Activated CD4-positive, alpha-beta T cell treated with anti-CD3 and anti-CD28 coated beads for 36 hours (primary cell): ENCODE measurements at regions of chr19 and their contacts with region 1.

Region 1: DNA sequence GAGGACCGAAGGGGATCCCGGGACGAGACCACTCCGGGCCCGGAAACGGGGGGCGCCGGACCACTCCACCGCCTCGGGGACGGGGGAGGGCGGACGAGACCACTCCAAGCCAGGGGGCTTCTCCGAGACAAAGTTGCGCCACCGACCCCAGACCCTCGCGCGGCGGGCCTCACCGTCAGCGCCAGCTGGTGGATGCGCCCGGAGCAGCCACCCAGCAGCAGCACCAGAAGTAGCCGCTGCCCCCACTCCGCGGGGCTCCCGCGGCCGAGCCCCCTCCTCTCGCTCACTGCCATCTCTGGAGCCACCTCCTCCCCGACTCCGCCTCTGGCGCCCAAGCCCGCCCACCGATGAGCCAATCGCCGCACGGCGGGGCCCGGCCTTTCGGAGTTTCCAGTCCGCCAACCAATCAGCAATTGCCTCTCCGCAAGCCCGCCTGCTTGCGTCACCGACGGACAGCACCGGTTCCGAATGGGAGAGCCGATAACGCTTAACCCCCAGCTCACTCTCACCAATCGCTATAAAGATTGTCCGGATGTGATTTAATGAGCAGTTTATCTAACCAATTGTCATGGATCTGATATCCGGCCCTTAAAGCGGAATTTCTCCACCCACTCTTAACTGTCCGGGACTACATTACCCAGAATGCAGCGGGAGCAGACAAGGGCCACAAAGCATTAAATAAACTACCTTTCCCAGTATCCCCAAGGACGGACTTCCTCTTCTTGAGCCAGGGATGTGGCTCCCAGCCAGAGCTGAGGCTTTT is at the start of gene GPR108:
- DNase-seq: peak; percentile 100
- ATAC-seq: peak; percentile 81
- H3K4me3 Mint-ChIP-seq: peak within 1 kb of the TSS; percentile 89
- H3K27ac Mint-ChIP-seq: peak within 1 kb of the TSS; percentile 98
- H3K4me1 Mint-ChIP-seq: peaks cover 39% of the 10 kb centered on the region
- H3K27me3 Mint-ChIP-seq: no peaks in the 10 kb centered on the region
- total RNA-seq, gene GPR108: 58.8 to 59.9 TPM

Region 2: DNA sequence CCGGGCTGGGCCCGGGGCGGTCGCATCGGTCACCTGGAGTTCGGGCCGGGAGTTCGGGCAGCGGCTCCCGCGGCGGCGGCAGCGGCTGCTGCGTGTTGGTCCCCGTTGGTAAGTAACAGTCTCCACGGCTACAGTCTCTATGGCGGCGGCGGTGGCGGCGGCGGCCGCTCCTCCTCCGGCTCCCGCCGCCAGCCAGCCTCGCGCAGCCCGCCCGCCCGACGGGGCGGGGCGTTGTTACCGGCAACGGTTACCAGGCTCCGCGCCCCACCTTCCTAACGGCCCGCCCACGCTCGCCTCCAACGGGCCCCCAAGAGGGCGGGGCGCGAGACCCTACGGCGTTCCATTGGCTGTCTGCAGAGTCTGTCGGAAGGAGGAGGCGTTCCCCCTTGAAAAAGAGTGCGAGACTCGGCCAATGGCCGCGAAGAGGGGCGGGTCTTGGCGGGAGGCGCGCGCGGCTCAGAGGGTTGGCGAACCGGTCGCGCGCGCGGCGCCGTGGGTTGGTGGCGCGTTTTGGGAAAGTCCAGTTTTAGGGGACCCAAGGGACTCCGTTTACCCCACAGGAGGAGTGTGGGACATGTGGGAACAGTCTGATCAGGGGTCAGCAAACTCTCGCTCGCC is 627.0 kb before region 1 on chr19 and contains the start of gene RFX2:
- CTCF ChIA-PET with region 1: no interaction called
- POLR2A ChIA-PET with region 1: no interaction called
- intact Hi-C with region 1: loop called in 1 of 2 experiments (anchors 1 kb)
- DNase-seq: peak; percentile 100
- ATAC-seq: peak; percentile 98
- H3K4me3 Mint-ChIP-seq: peak within 1 kb of the TSS; percentile 76
- H3K27ac Mint-ChIP-seq: peak within 1 kb of the TSS; percentile 60
- H3K4me1 Mint-ChIP-seq: peaks cover 23% of the 10 kb centered on the region
- H3K27me3 Mint-ChIP-seq: peaks cover 16% of the 10 kb centered on the region
- total RNA-seq, gene RFX2: 8.6 to 8.9 TPM

Region 3: DNA sequence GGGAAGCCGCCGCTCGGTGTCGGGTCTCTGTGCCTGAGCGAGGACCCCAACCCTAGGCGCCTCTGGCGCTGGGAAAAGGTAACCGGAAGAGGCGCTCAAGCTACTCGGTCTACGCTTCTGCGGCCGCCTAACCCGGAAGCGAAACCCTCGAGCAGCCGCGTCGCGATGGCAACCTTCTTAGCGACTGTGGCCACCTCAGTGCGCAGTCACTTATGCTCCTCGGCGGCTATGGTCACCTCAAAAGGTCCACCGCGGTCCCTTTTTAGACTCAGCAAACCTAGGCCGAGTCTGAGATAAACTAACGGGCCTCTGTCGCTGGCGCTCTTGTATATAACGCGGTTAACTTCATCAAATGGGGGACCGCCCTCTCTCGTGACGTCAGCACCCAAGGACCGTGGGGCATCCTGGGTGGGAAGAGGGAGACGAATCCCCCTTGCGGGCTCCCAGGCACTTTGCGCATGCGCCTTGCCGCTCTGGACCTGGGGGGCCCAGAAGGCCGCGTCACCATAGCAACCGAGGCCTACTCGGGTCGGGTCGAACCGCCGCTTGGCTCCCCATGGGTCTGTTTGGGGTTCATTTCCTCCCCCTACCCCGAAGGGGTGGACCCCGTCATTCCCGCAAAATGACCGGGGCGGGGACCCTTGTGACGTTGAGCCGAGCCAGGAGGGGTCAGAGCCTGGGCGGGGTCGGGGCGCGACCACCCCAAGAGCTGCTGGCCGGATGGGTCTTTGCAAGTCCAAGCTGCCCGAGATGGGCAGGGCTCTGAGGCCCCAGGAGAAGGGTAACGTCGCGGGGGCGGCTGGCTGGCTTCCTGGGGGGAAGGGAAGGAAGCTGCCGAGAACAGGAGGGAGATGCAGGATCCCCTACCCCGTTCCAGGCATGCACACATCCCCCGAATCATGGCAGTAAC is 344.1 kb before region 1 on chr19 and contains the start of gene GTF2F1:
- CTCF ChIA-PET with region 1: no interaction called
- POLR2A ChIA-PET with region 1: no interaction called
- intact Hi-C with region 1: loop called in 1 of 2 experiments (anchors 1 kb)
- DNase-seq: peak; percentile 96
- ATAC-seq: peak; percentile 89
- H3K4me3 Mint-ChIP-seq: peak within 1 kb of the TSS; percentile 85
- H3K27ac Mint-ChIP-seq: peak within 1 kb of the TSS; percentile 91
- H3K4me1 Mint-ChIP-seq: peaks cover 22% of the 10 kb centered on the region
- H3K27me3 Mint-ChIP-seq: no peaks in the 10 kb centered on the region
- total RNA-seq, gene GTF2F1: 60.9 to 78.5 TPM

Region 4: DNA sequence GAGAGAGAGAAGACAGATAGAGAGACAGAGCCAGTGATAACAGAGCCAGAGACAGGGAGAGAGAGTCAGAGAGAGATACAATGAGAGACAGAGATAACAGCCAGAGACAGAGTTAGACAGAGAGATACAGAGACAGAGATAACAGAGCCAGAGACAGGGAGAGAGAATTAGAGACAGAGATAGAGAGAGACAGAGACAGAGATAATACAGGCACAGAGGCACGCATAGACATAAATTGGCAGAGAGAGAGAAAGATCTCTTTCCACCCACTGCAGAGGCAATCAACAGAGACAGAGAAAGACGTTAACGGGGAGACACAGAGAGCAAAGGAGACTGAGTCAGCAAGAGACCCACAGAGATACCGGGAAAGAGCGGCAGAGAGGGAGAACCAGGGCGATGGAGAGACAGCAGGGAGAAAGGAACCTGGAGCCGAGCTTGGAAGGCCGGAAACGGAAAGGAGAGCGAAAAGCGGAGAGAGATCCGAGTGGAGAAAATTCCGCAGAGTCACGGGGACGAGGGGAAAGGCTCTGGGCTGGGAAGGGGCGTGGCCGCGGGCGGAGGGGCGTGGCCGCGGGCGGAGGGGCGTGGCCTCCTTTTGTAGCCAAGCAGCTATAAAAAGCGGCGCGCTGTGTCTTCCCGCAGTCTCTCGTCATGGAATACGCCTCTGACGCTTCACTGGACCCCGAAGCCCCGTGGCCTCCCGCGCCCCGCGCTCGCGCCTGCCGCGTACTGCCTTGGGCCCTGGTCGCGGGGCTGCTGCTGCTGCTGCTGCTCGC is 206.9 kb before region 1 on chr19 and contains the start of gene TNFSF9:
- CTCF ChIA-PET with region 1: no interaction called
- POLR2A ChIA-PET with region 1: no interaction called
- intact Hi-C with region 1: loop called in 1 of 2 experiments (anchors 1 kb)
- DNase-seq: peak; percentile 90
- ATAC-seq: peak; percentile 73
- H3K4me3 Mint-ChIP-seq: peak within 1 kb of the TSS; percentile 77
- H3K27ac Mint-ChIP-seq: peak within 1 kb of the TSS; percentile 80
- H3K4me1 Mint-ChIP-seq: peaks cover 30% of the 10 kb centered on the region
- H3K27me3 Mint-ChIP-seq: peaks cover 36% of the 10 kb centered on the region
- total RNA-seq, gene TNFSF9: 0.49 to 0.57 TPM

Region 5: GRCh38 chr19:6718741-6719539 is 18.5 kb before region 1 on chr19:
- CTCF ChIA-PET with region 1: no interaction called
- POLR2A ChIA-PET with region 1: no interaction called
- intact Hi-C with region 1: loop called (anchors 1 to 2 kb)
- DNase-seq: peak; percentile 59
- ATAC-seq: peak; percentile 82
- H3K4me3 Mint-ChIP-seq: no peak overlapping the region
- H3K27ac Mint-ChIP-seq: no peak overlapping the region
- H3K4me1 Mint-ChIP-seq: peaks cover 15% of the 10 kb centered on the region
- H3K27me3 Mint-ChIP-seq: peaks cover 8% of the 10 kb centered on the region

Region 6: DNA sequence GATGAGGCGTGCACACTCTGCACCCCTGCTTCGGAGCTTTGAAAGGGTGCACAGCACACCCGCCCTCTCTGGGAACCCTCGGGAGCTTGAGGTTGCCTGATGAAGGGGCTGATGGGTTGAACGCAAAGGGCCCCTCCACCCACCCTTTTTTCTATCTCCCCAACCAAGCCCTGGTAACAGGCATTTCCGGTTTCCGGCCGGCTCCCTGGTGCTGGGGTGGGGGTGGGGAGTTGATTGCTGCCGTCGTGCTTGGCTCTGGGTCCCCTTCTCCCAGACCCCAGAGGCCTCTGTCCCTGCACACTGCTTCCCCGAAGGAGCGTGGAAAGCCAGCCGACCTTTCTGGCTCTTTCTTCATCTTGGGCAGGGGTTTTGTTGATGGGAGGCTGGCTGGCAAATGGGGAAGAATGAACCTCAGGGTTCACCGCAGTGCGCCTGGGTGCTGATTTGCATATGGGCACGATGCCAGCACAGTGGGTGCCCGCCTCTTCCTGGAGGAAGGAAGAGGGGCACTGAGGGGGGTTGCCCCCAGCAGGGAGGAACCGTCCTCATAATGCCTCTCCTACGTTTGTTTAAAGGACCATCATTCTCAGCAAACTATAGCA is 64.1 kb after region 1 on chr19:
- CTCF ChIA-PET with region 1: interaction called, 3 read pairs
- POLR2A ChIA-PET with region 1: interaction called, 3 read pairs
- intact Hi-C with region 1: loop called (anchors 1 to 2 kb)
- DNase-seq: peak; percentile 90
- ATAC-seq: peak; percentile 75
- H3K4me3 Mint-ChIP-seq: peak overlapping the region; percentile 82
- H3K27ac Mint-ChIP-seq: peak overlapping the region; percentile 98
- H3K4me1 Mint-ChIP-seq: peaks cover 72% of the 10 kb centered on the region
- H3K27me3 Mint-ChIP-seq: no peaks in the 10 kb centered on the region

Region 7: GRCh38 chr19:7004313-7004931 is 267.0 kb after region 1 on chr19:
- CTCF ChIA-PET with region 1: no interaction called
- POLR2A ChIA-PET with region 1: no interaction called
- intact Hi-C with region 1: no loop called
- DNase-seq: no peak
- ATAC-seq: peak; percentile 43
- H3K4me3 Mint-ChIP-seq: no peak overlapping the region
- H3K27ac Mint-ChIP-seq: no peak overlapping the region
- H3K4me1 Mint-ChIP-seq: peaks cover 29% of the 10 kb centered on the region
- H3K27me3 Mint-ChIP-seq: no peaks in the 10 kb centered on the region

Region 8: DNA sequence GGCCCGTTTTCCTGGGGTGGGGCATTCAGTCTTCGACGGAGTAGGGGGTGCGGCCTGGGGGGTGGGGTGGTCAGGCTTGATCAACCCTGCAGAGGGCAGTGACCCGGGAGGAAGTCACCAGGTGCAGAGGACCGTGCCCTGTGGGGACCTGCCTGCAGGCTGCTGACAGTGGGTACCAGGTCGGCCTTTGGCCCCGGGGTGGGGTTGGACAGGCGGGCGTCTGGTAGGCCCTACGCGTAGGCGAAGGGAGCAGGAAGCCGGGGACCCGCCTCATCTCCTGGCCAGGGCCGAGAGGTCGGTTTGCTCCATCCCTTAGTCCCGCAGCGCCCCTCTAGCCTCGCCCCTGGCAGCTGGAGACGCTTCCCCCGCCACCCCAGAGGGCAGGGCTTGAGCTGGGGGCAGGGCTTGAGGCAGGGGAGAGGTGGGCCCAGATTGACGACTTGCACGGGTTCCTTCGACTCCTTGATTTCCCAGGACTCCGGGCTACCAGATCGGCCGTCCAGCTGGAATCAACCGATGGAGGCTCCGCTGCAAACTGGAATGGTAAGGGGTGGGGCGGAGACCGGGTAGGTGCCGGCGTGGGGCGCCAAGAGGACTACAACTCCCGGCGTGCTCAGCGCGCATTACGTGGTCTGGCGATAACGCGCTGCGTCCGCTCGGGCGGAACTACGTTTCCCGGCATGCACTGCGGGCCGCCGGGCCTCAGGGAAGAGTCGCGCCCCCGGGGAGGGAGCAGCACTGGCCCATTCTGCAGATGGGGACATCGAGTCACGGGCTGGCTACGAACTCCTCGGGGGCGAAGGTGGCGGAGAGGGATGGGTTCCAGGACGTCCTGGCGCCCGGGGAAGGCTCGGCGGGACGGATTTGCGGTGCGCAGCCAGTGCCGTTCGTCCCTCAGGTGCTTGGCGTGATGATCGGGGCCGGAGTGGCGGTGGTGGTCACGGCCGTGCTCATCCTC is 797.8 kb after region 1 on chr19 and contains the start of gene PNPLA6:
- CTCF ChIA-PET with region 1: no interaction called
- POLR2A ChIA-PET with region 1: no interaction called
- intact Hi-C with region 1: loop called in 1 of 2 experiments (anchors 1 kb)
- DNase-seq: peak; percentile 97
- ATAC-seq: peak; percentile 80
- H3K4me3 Mint-ChIP-seq: peak within 1 kb of the TSS; percentile 91
- H3K27ac Mint-ChIP-seq: peak within 1 kb of the TSS; percentile 84
- H3K4me1 Mint-ChIP-seq: peaks cover 20% of the 10 kb centered on the region
- H3K27me3 Mint-ChIP-seq: no peaks in the 10 kb centered on the region
- total RNA-seq, gene PNPLA6: 82.2 to 108 TPM